ENCODE measurements at regions of chr5 and their contacts with region 1.

Region 1: DNA sequence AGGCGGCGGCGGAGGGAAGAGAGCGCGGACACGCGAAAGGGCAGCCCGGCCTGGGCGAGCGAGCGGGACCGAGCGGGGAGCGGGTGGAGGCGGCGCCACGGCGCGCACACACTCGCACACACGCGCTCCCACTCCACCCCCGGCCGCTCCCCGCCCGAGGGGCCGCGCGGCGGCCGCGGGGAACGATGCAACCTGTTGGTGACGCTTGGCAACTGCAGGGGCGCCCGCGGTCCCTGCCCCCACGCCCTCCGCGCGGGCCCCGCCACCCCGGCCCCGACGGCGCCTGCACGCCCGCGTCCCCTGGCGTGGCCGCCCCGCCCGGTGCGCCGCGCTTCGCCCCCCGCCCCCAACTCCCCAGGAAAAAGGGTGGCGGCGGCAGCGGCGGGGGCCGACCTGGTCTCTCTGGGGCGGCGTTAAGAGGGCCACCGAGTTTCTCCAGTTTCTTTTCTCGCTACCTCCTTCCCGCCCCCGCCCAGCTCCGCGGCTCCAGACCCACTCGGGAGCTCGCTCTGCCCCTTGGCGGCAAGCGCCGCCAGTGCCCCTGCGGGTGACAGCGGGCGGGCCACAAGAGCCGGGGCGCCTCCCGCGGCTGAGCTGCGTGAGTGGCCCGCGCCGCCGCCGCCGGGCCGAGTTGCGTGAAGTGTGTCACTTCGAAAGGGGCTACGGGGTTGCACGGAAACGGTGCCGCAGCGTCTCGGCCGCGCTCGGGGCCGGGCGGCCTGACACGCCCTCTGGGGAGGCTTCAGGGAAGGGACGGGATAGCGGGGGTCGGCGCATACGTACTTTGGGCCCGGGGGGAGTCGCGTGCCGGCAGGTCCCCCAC is at the start of gene NR3C1:
- DNase-seq: peak; percentile 84 to 94 (median 90)
- ATAC-seq: peak; percentile 71 to 79 (median 76)
- H3K4me3 ChIP-seq: peak within 1 kb of the TSS; percentile 66 to 91 (median 78)
- H3K27ac ChIP-seq: peak within 1 kb of the TSS; percentile 92 to 100 (median 98)
- H3K4me1 ChIP-seq: peaks cover 0 to 16% (median 14%) of the 10 kb centered on the region in 3 donors
- H3K27me3 ChIP-seq: no peaks in the 10 kb centered on the region
- CTCF ChIP-seq: peak in 3 of 4 donors; percentile 38 to 55 (median 49)
- total RNA-seq, gene NR3C1: 20.4 to 42.2 (median 28.0) TPM

Region 2: DNA sequence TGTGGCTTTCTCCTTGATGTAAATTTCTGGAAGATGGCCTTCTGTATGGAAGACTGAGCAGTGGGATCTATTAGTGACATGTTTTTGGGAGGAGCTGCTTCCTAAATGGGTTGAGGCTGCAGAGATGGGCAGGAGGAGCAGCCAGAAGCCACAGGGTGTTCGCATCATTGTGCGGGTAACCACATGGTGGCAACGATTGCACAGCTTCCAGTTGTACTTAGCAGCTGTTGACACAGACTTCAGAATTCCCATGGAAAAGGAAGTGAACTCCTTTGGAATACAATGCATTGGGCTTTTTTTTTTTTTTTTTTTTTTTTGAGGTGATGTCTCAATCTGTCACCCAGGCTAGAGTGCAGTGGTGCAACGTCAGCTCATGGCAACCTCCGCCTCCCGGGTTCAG is 297.6 kb before region 1 on chr5:
- intact Hi-C with region 1: loop called in 1 of 3 experiments (anchors 5 kb)
- DNase-seq: peak in 5 of 6 donors; percentile 56 to 73 (median 60)
- ATAC-seq: peak; percentile 91 to 96 (median 92)
- H3K4me3 ChIP-seq: no peak overlapping the region
- H3K27ac ChIP-seq: no peak overlapping the region
- H3K4me1 ChIP-seq: peaks cover 4 to 21% (median 17%) of the 10 kb centered on the region in 3 donors
- H3K27me3 ChIP-seq: no peaks in the 10 kb centered on the region
- CTCF ChIP-seq: peak in 1 of 4 donors; percentile 10

Region 3: GRCh38 chr5:143957455-143957854 is 553.7 kb after region 1 on chr5:
- intact Hi-C with region 1: no loop called
- DNase-seq: no peak
- ATAC-seq: no peak
- H3K4me3 ChIP-seq: no peak overlapping the region
- H3K27ac ChIP-seq: no peak overlapping the region
- H3K4me1 ChIP-seq: no peaks in the 10 kb centered on the region
- H3K27me3 ChIP-seq: no peaks in the 10 kb centered on the region
- CTCF ChIP-seq: no peak

Measured in pancreas (tissue), 10 donors.